Activated CD4-positive, alpha-beta T cell treated with anti-CD3 and anti-CD28 coated beads, Interleukin-2, amount 10 ng/mL, durations not matched to agents 24 days and 14 days (primary cell): ENCODE measurements at regions of chr5 and their contacts with region 1.

Region 1: GRCh38 chr5:180802325-180803180 is at the start of gene MGAT1:
- DNase-seq: peak; percentile 94
- H3K4me3 Mint-ChIP-seq: peak within 1 kb of the TSS; percentile 87
- H3K27ac Mint-ChIP-seq: peak within 1 kb of the TSS; percentile 88
- H3K4me1 Mint-ChIP-seq: peaks cover 77% of the 10 kb centered on the region
- H3K27me3 Mint-ChIP-seq: no peaks in the 10 kb centered on the region
- total RNA-seq, gene MGAT1: 119 and 122 TPM in 2 replicates

Region 2: GRCh38 chr5:179550511-179551230 is 1251.9 kb before region 1 on chr5 and contains the start of gene RUFY1:
- intact Hi-C with region 1: loop called (anchors 5 kb)
- DNase-seq: peak; percentile 96
- H3K4me3 Mint-ChIP-seq: peak within 1 kb of the TSS; percentile 97
- H3K27ac Mint-ChIP-seq: peak within 1 kb of the TSS; percentile 99
- H3K4me1 Mint-ChIP-seq: peaks cover 23% of the 10 kb centered on the region
- H3K27me3 Mint-ChIP-seq: peaks cover 2% of the 10 kb centered on the region
- total RNA-seq, gene RUFY1: 38.8 and 40.6 TPM in 2 replicates

Region 3: GRCh38 chr5:180784497-180785097 is 18.0 kb before region 1 on chr5:
- intact Hi-C with region 1: loop called (anchors 1 kb)
- DNase-seq: peak; percentile 89
- H3K4me3 Mint-ChIP-seq: no peak overlapping the region
- H3K27ac Mint-ChIP-seq: no peak overlapping the region
- H3K4me1 Mint-ChIP-seq: peaks cover 14% of the 10 kb centered on the region
- H3K27me3 Mint-ChIP-seq: no peaks in the 10 kb centered on the region

Region 4: DNA sequence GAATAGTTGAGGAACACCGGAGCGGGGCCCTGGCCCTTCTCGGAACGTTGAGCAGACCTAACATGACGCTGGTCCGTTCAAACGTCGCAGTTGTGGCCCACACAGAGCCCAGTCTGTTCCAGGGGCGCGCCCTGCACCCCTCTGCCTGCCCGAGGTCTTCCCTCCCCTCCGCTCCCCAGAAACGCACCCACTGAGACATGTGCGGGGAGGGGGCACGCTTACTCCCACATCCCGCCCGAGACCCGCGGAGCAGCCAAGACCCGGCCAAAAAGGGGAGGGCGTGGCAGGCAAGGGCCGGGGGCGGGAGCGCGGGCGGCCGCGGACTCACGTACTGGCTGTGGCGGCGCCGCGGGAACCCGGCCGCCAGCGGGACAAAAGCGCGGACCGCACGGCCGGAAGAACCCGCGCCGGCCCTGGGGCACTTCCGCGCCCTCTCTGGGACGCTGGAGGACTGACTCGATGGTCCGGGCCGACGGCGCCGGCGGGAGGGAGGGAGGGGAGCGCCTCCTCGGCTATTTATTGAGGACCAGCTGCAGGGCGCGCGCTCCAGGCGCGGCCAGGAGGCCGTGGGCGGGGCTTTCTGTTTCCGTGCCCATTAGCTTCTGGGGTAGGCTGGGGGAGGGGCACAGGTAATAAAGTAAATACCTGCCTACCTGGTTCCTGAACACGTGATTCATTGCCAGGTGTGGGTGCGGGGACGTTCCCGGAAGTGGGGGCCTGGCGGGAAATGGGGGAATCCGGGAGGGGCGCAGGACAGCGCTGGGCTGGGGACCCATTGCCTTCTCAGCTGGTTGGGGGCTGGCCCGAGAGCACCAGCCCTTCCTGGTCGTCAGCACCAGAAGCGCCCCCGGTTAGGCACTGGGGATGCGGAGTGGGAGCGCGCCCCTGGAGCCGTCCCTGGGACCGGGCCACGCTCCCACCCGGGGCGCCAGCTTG is 58.6 kb after region 1 on chr5 and contains the start of gene ZFP62:
- intact Hi-C with region 1: loop called (anchors 1 kb)
- DNase-seq: peak; percentile 96
- H3K4me3 Mint-ChIP-seq: peak within 1 kb of the TSS; percentile 91
- H3K27ac Mint-ChIP-seq: peak within 1 kb of the TSS; percentile 94
- H3K4me1 Mint-ChIP-seq: peaks cover 15% of the 10 kb centered on the region
- H3K27me3 Mint-ChIP-seq: peaks cover 6% of the 10 kb centered on the region
- total RNA-seq, gene ZFP62: 26.7 and 28.0 TPM in 2 replicates

Region 5: GRCh38 chr5:181217111-181217802 is 414.7 kb after region 1 on chr5:
- intact Hi-C with region 1: loop called (anchors 1 kb)
- DNase-seq: peak; percentile 85
- H3K4me3 Mint-ChIP-seq: peak overlapping the region; percentile 89
- H3K27ac Mint-ChIP-seq: peak overlapping the region; percentile 91
- H3K4me1 Mint-ChIP-seq: peaks cover 40% of the 10 kb centered on the region
- H3K27me3 Mint-ChIP-seq: peaks cover 10% of the 10 kb centered on the region

Region 6: DNA sequence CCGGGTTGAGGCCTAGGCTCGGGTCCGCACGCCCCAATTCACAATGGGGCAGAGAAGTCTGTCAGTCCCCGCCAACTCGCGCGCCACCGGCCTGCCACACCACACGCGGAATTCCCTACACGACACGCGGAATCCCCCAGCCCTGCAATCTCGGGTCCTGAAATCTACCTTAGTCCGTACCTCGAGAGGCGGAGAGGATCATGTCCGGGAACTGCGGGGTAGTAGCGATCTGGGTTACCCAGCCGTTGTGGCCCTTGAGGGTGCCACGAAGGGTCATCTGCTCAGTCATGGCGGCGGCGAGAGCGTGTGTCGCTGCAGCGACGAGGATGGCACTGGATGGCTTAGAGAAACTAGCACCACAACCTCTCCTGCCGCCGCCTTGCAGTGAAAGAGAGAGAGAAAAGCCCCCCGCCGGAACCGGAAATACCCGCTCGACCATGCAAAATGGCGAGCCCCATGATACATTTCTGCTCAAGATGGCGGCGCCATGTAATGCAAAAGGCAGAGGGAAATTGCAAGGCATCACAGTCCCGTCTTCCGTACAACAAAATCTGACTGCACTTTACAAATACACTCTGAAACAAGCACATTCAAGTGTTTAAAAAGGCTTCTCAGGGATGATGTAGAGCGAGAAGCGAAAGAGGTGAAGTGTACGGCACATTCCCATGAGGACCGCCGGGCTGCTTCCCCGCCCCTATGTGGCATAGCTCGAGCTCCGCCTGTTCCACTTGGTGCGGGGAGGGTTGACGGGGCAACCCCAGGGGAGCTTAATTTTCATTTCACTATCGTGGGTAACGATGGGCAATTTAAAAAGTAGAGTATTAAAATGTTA is 441.2 kb after region 1 on chr5 and contains the start of gene RACK1:
- intact Hi-C with region 1: loop called (anchors 2 kb)
- DNase-seq: peak; percentile 96
- H3K4me3 Mint-ChIP-seq: peak within 1 kb of the TSS; percentile 98
- H3K27ac Mint-ChIP-seq: peak within 1 kb of the TSS; percentile 99
- H3K4me1 Mint-ChIP-seq: peaks cover 49% of the 10 kb centered on the region
- H3K27me3 Mint-ChIP-seq: no peaks in the 10 kb centered on the region
- total RNA-seq, gene RACK1: 2,172 and 2,196 TPM in 2 replicates